Left colon (tissue), 2 donors: ENCODE measurements at regions of chr18 and their contacts with region 1.

Region 1: GRCh38 chr18:36284671-36285295 is 12.7 kb upstream of the FHOD3 start:
- DNase-seq: peak in 1 of 2 donors; percentile 30
- ATAC-seq: peak; percentile 66

Region 2: DNA sequence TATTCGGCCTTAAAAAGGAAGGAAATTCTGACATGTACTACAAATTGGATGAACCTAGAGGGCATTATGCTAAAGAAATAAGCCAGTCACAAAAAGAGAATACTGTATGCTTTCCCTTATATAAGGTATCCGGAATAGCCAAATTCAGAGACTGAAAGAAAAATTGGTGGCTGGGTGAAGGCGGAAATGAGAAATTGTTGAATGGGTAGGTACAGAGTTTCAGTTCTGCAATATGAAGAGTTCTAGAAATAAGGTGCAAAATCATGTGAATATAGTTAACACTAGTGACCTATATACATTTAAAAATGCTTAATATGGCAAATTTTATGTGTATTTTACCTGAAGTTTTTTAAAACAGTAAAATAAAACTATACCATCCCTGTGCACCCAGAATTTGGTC is 269.2 kb before region 1 on chr18:
- intact Hi-C with region 1: loop called in 1 of 2 experiments (anchors 5 kb)
- DNase-seq: no peak
- ATAC-seq: no peak

Region 3: GRCh38 chr18:36095936-36096519 is 188.8 kb before region 1 on chr18:
- intact Hi-C with region 1: loop called (anchors 5 to 10 kb)
- DNase-seq: no peak
- ATAC-seq: peak; percentile 58

Region 4: GRCh38 chr18:36101943-36102342 is 182.8 kb before region 1 on chr18:
- intact Hi-C with region 1: loop called (anchors 5 to 10 kb)
- DNase-seq: no peak
- ATAC-seq: no peak

Region 5: GRCh38 chr18:36610661-36611060 is 325.9 kb after region 1 on chr18:
- intact Hi-C with region 1: no loop called
- DNase-seq: no peak
- ATAC-seq: no peak